ENCODE measurements at regions of chr4 and their contacts with region 1.

Region 1: DNA sequence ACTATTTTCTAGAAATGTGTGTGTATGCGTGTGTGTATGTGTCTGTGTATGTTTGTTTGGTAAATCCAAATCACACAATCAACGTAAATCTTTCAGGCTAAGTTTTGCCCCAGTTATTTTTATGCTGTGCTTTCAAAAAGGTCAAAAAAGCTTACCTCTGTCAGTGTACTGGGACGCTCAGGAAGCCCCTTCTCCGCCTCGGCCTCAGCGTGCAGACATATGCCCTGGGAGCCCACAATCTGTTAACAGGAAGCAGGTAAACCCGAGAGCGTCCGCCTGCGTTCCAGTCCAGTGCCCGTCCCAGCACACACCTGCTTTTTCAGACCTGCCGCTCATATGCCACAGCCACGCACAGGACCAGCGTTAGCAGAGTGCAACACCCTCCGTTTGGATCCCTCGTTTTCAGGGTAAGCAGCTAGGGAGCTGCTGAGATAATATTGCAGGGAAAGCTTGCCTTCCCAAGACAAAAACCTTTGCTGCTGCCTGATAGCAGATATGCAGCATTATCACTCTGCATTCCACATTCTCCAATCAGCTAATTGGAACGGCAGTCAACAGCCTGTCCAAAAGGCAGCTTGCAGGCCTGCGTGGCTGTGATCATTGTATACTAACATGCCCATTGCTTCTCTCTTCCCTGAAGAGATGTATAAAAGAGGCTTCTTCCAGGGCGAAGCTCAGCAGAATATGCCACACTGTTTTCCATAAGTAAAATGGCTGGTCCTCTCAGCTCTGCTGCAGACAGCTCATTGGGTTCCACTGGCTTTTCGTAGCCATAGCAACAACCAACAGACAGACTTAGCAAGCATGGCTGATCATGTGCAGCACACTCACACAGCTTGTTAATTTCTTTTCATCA is at the start of gene SORBS2:
- DNase-seq: no peak
- ATAC-seq: peak; percentile 87 to 89
- total RNA-seq, gene SORBS2: 439 to 535 TPM

Region 2: GRCh38 chr4:185597532-185598188 is 214.1 kb before region 1 on chr4:
- intact Hi-C with region 1: no loop called
- DNase-seq: peak; percentile 82
- ATAC-seq: peak; percentile 60 to 66

Region 3: GRCh38 chr4:185847352-185848107 is 35.8 kb after region 1 on chr4:
- intact Hi-C with region 1: loop called in 1 of 2 experiments (anchors 5 kb)
- DNase-seq: peak; percentile 73
- ATAC-seq: peak; percentile 83 to 85